IMR-90 (cell line): ENCODE measurements at regions of chr3 and their contacts with region 1.

Region 1: DNA sequence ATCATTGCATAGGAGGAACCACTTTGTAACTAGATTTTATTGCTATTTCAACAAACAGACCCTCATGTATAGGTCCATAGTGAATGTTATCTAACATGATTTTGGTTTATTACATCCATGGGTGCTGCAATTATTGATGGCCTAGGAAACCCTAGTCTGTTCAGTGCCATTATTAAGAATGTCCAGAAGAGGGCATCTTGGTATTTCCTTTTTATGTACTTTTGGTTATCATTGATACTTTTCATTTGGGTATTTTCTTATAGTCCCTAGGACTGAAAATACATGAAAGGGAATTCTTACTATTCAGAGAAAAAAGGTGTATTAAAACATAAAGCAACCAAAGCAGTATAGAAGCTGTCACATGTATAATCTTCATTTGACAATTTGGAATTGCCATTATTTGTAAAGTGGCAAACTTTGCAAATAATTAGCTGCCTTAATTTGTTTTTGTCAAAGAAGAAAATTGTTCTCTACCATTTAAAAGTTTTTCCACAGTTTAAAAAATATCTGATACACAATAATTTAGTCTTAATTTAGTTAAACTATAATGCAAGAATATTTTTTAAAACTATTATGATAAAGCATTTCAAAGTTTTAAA is 48.7 kb downstream of the CNOT10 start:
- DNase-seq: peak; percentile 44
- ATAC-seq: peak; percentile 70
- H3K4me3 ChIP-seq: no peak overlapping the region
- H3K27ac ChIP-seq: no peak overlapping the region
- H3K4me1 ChIP-seq: no peaks in the 10 kb centered on the region
- H3K27me3 ChIP-seq: no peaks in the 10 kb centered on the region
- CTCF ChIP-seq: peak; percentile 58
- POLR2A ChIP-seq: no peak
- RAD21 ChIP-seq: peak; percentile 61

Region 2: DNA sequence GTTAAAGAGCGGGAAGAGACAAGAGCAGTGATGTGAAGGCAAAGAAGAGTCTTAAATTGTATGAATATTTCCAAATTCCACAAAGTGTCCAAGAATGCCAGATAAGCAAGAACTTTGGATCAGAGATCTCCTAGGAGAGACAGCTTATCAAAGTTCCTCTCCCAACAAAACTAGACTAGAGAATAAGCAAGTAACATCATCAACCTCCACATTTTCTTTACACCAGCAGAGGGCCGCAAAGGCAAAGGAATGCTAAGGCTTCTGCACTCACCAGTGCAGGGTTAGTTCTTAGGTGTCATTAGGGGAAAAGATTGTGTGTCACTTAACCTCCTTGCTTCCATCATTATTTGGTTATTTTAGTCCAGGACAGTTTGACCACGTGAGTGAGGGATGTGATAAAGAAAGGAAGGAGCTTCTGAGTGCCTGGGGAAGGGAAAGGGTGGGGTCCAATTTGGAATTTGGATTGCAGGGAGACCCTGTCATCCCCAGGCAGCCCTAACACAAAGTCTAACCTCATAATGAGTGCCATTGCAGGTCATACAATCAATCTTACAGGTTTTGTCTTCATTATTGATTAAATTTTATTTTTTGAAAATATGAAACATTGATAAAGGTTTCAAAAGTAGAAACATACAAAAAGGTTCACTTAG is 223.5 kb before region 1 on chr3:
- CTCF ChIA-PET with region 1: no interaction called
- POLR2A ChIA-PET with region 1: no interaction called
- dilution Hi-C with region 1: no loop called
- in situ Hi-C with region 1: no loop called
- intact Hi-C with region 1: loop called (anchors 2 kb)
- DNase-seq: peak; percentile 71
- ATAC-seq: peak; percentile 97
- H3K4me3 ChIP-seq: no peak overlapping the region
- H3K27ac ChIP-seq: no peak overlapping the region
- H3K4me1 ChIP-seq: no peaks in the 10 kb centered on the region
- H3K27me3 ChIP-seq: no peaks in the 10 kb centered on the region
- CTCF ChIP-seq: peak; percentile 89
- POLR2A ChIP-seq: peak; percentile 55; the same call in 1 of the 2 replicates
- RAD21 ChIP-seq: peak; percentile 98

Region 3: GRCh38 chr3:32781210-32781968 is 47.7 kb after region 1 on chr3:
- CTCF ChIA-PET with region 1: no interaction called
- POLR2A ChIA-PET with region 1: no interaction called
- dilution Hi-C with region 1: no loop called
- in situ Hi-C with region 1: no loop called
- intact Hi-C with region 1: loop called (anchors 1 kb)
- DNase-seq: peak; percentile 68
- ATAC-seq: peak; percentile 97
- H3K4me3 ChIP-seq: peak overlapping the region; percentile 69
- H3K27ac ChIP-seq: no peak overlapping the region
- H3K4me1 ChIP-seq: no peaks in the 10 kb centered on the region; the same call in 1 of the 2 replicates
- H3K27me3 ChIP-seq: peaks cover 4% of the 10 kb centered on the region; the same call in 1 of the 2 replicates
- CTCF ChIP-seq: peak; percentile 79
- POLR2A ChIP-seq: no peak
- RAD21 ChIP-seq: peak; percentile 54

Region 4: GRCh38 chr3:32934150-32934742 is 200.5 kb after region 1 on chr3:
- CTCF ChIA-PET with region 1: no interaction called
- POLR2A ChIA-PET with region 1: no interaction called
- dilution Hi-C with region 1: no loop called
- in situ Hi-C with region 1: loop called (anchors 5 kb)
- intact Hi-C with region 1: loop called (anchors 1 kb)
- DNase-seq: peak; percentile 13
- ATAC-seq: no peak
- H3K4me3 ChIP-seq: no peak overlapping the region
- H3K27ac ChIP-seq: no peak overlapping the region
- H3K4me1 ChIP-seq: no peaks in the 10 kb centered on the region
- H3K27me3 ChIP-seq: peaks cover 9% of the 10 kb centered on the region
- CTCF ChIP-seq: peak; percentile 66
- POLR2A ChIP-seq: no peak
- RAD21 ChIP-seq: peak; percentile 59

Region 5: GRCh38 chr3:32992322-32992692 is 258.6 kb after region 1 on chr3:
- CTCF ChIA-PET with region 1: no interaction called
- POLR2A ChIA-PET with region 1: no interaction called
- dilution Hi-C with region 1: no loop called
- in situ Hi-C with region 1: no loop called
- intact Hi-C with region 1: no loop called
- DNase-seq: no peak
- ATAC-seq: no peak
- H3K4me3 ChIP-seq: no peak overlapping the region
- H3K27ac ChIP-seq: no peak overlapping the region
- H3K4me1 ChIP-seq: no peaks in the 10 kb centered on the region
- H3K27me3 ChIP-seq: no peaks in the 10 kb centered on the region
- CTCF ChIP-seq: no peak
- POLR2A ChIP-seq: no peak
- RAD21 ChIP-seq: no peak

Region 6: GRCh38 chr3:33074217-33075067 is 340.7 kb after region 1 on chr3:
- CTCF ChIA-PET with region 1: no interaction called
- POLR2A ChIA-PET with region 1: no interaction called
- dilution Hi-C with region 1: no loop called
- in situ Hi-C with region 1: no loop called
- intact Hi-C with region 1: loop called (anchors 10 kb)
- DNase-seq: peak; percentile 72
- ATAC-seq: peak; percentile 91
- H3K4me3 ChIP-seq: no peak overlapping the region
- H3K27ac ChIP-seq: no peak overlapping the region
- H3K4me1 ChIP-seq: no peaks in the 10 kb centered on the region
- H3K27me3 ChIP-seq: no peaks in the 10 kb centered on the region
- CTCF ChIP-seq: peak; percentile 86
- POLR2A ChIP-seq: no peak
- RAD21 ChIP-seq: peak; percentile 71

Region 7: DNA sequence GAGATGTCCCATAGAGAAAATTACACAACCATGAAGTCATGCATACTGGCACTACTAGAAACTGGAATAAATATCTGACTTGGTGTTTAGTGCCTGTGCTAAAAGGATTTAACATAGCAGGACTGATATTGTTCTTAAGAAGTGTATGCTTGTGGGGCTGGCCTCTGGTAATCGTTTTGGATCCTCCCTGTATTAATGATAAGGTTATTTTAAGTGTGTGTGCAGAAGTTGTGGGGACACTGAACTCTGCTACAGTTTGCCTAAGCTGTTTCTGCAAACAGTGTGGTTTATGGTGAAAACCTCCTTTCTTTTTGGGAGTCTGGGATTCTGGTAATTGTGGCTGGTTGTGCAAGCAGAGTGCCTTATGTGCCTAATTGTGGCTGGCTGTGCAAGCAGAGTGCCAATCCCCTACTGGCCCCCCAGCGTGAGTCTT is 863.5 kb after region 1 on chr3:
- CTCF ChIA-PET with region 1: no interaction called
- POLR2A ChIA-PET with region 1: no interaction called
- dilution Hi-C with region 1: no loop called
- in situ Hi-C with region 1: no loop called
- intact Hi-C with region 1: no loop called
- DNase-seq: no peak
- ATAC-seq: no peak; the same call in 1 of the 2 replicates
- H3K4me3 ChIP-seq: no peak overlapping the region
- H3K27ac ChIP-seq: no peak overlapping the region
- H3K4me1 ChIP-seq: no peaks in the 10 kb centered on the region
- H3K27me3 ChIP-seq: no peaks in the 10 kb centered on the region
- CTCF ChIP-seq: no peak
- POLR2A ChIP-seq: no peak
- RAD21 ChIP-seq: no peak